Activated B cell treated with CpG ODN at 0.5 μM for 24 hours (primary cell): ENCODE measurements at regions of chr6 and their contacts with region 1.

Region 1: GRCh38 chr6:129683601-129684322 is 26.2 kb downstream of the ARHGAP18 start:
- DNase-seq: no peak
- ATAC-seq: peak; percentile 99
- H3K4me3 Mint-ChIP-seq: peak overlapping the region; percentile 50
- H3K27ac Mint-ChIP-seq: peak overlapping the region; percentile 76
- H3K4me1 Mint-ChIP-seq: peaks cover 50% of the 10 kb centered on the region
- H3K27me3 Mint-ChIP-seq: no peaks in the 10 kb centered on the region
- CTCF ChIP-seq: no peak

Region 2: GRCh38 chr6:129709769-129710449 is 26.1 kb after region 1 on chr6 and contains the start of gene ARHGAP18:
- CTCF ChIA-PET with region 1: interaction called, 4 read pairs
- POLR2A ChIA-PET with region 1: interaction called, 10 read pairs
- intact Hi-C with region 1: loop called (anchors 1 kb)
- DNase-seq: peak; percentile 70
- ATAC-seq: peak; percentile 97
- H3K4me3 Mint-ChIP-seq: peak within 1 kb of the TSS; percentile 98
- H3K27ac Mint-ChIP-seq: peak within 1 kb of the TSS; percentile 93
- H3K4me1 Mint-ChIP-seq: peaks cover 47% of the 10 kb centered on the region
- H3K27me3 Mint-ChIP-seq: no peaks in the 10 kb centered on the region
- CTCF ChIP-seq: no peak
- total RNA-seq, gene ARHGAP18: 7.9 and 9.0 TPM in 2 replicates

Region 3: DNA sequence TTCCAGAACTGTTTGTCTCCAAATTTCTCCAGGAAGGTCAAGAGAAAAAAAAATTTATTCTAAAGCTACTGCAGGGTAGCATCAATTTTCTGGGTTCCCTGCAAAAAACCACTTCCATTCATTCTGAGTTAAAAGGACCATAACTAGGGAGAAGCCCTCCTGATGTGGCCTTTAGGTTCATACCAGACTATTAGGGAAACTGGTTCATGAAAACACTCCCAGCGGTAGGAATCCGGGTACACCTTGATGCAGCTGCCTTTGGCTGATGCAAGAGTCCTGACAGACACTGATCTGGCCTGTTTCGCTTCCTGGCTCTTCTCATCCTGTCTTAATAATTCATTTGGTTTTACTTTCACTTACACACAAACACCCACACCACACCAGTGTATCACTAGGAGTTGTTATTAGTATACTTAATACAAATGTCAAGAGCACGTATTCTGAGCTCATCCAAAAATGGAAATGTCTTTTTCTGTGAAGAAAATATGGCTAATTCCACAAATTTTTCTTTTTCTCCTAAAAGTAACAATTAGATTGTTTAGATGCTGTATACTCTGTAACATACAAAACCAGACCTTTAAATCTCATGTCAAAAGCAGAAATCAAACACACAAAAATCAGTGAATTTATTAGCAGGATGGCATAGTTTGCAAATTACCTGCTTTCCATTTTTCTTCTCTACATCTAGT is 64.6 kb after region 1 on chr6:
- CTCF ChIA-PET with region 1: interaction called, 4 read pairs
- POLR2A ChIA-PET with region 1: interaction called, 7 read pairs
- intact Hi-C with region 1: loop called (anchors 2 kb)
- DNase-seq: no peak
- ATAC-seq: peak; percentile 89
- H3K4me3 Mint-ChIP-seq: peak overlapping the region; percentile 66
- H3K27ac Mint-ChIP-seq: peak overlapping the region; percentile 94
- H3K4me1 Mint-ChIP-seq: peaks cover 50% of the 10 kb centered on the region
- H3K27me3 Mint-ChIP-seq: no peaks in the 10 kb centered on the region
- CTCF ChIP-seq: no peak

Region 4: GRCh38 chr6:130115036-130115435 is 431.3 kb after region 1 on chr6:
- CTCF ChIA-PET with region 1: no interaction called
- POLR2A ChIA-PET with region 1: no interaction called
- intact Hi-C with region 1: loop called (anchors 10 kb)
- DNase-seq: no peak
- ATAC-seq: peak; percentile 91
- H3K4me3 Mint-ChIP-seq: peak overlapping the region; percentile 73
- H3K27ac Mint-ChIP-seq: peak overlapping the region; percentile 96
- H3K4me1 Mint-ChIP-seq: peaks cover 79% of the 10 kb centered on the region
- H3K27me3 Mint-ChIP-seq: no peaks in the 10 kb centered on the region
- CTCF ChIP-seq: no peak